Activated CD4-positive, alpha-beta memory T cell treated with anti-CD3 and anti-CD28 coated beads for 36 hours (primary cell): ENCODE measurements at regions of chr6 and their contacts with region 1.

Region 1: GRCh38 chr6:154773610-154774089 is 40.4 kb downstream of the SCAF8 start:
- DNase-seq: no peak
- H3K4me3 Mint-ChIP-seq: peak overlapping the region; percentile 48
- H3K27ac Mint-ChIP-seq: peak overlapping the region; percentile 83
- H3K4me1 Mint-ChIP-seq: peaks cover 50% of the 10 kb centered on the region
- H3K27me3 Mint-ChIP-seq: no peaks in the 10 kb centered on the region

Region 2: DNA sequence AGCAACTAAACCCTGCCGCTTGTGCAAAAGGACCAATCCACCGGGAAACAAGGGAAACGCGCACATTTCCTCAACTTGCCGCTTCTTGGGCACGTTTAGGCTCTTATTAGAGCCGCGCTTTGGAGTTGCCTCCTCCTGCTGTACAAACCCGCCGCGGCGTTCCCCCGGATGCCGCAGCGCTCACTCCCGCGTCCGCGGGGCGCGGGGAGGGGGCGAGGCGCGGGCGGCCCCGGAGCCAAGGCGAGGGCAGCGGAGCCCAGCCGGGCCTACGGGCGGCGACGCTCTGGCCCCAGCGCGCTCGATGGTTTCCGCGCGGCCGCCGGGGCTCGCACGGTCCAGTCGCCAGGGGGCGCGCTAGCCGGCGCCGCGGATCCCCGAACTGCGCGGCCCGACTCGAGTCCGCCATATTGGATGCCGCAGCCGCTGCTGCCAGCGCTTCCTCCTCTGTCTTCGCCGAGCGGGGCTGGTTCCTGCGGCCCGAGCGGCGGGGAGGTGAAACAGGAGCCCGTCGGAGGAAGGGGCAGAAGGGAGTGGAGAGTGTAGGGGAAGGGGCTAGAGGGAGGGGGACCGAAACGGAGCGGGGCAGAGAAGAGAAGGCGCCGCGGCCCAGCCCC is 40.5 kb before region 1 on chr6 and contains the start of gene SCAF8:
- CTCF ChIA-PET with region 1: interaction called, 5 read pairs
- POLR2A ChIA-PET with region 1: interaction called, 9 read pairs
- intact Hi-C with region 1: loop called (anchors 1 kb)
- DNase-seq: peak; percentile 86
- H3K4me3 Mint-ChIP-seq: peak within 1 kb of the TSS; percentile 85
- H3K27ac Mint-ChIP-seq: peak within 1 kb of the TSS; percentile 84
- H3K4me1 Mint-ChIP-seq: peaks cover 34% of the 10 kb centered on the region
- H3K27me3 Mint-ChIP-seq: no peaks in the 10 kb centered on the region
- total RNA-seq, gene SCAF8: 30.1 to 31.7 TPM

Region 3: GRCh38 chr6:154738551-154738961 is 35.1 kb before region 1 on chr6:
- CTCF ChIA-PET with region 1: interaction called, 5 read pairs
- POLR2A ChIA-PET with region 1: interaction called, 9 read pairs
- intact Hi-C with region 1: loop called (anchors 1 kb)
- DNase-seq: no peak
- H3K4me3 Mint-ChIP-seq: peak overlapping the region; percentile 9
- H3K27ac Mint-ChIP-seq: peak overlapping the region; percentile 20
- H3K4me1 Mint-ChIP-seq: peaks cover 62% of the 10 kb centered on the region
- H3K27me3 Mint-ChIP-seq: no peaks in the 10 kb centered on the region

Region 4: GRCh38 chr6:154800338-154800737 is 26.7 kb after region 1 on chr6:
- CTCF ChIA-PET with region 1: interaction called, 8 read pairs
- POLR2A ChIA-PET with region 1: no interaction called
- intact Hi-C with region 1: loop called (anchors 2 kb)
- DNase-seq: no peak
- H3K4me3 Mint-ChIP-seq: no peak overlapping the region
- H3K27ac Mint-ChIP-seq: peak overlapping the region; percentile 35
- H3K4me1 Mint-ChIP-seq: peaks cover 20% of the 10 kb centered on the region
- H3K27me3 Mint-ChIP-seq: no peaks in the 10 kb centered on the region